ENCODE measurements at regions of chr11 and their contacts with region 1.

Region 1: GRCh38 chr11:2975594-2975993 is 16.5 kb downstream of the NAP1L4 start:
- DNase-seq: peak; percentile 60 to 73 (median 73)
- H3K4me3 ChIP-seq: no peak overlapping the region
- H3K27ac ChIP-seq: no peak overlapping the region
- H3K4me1 ChIP-seq: no peaks in the 10 kb centered on the region
- H3K27me3 ChIP-seq: no peaks in the 10 kb centered on the region

Region 2: DNA sequence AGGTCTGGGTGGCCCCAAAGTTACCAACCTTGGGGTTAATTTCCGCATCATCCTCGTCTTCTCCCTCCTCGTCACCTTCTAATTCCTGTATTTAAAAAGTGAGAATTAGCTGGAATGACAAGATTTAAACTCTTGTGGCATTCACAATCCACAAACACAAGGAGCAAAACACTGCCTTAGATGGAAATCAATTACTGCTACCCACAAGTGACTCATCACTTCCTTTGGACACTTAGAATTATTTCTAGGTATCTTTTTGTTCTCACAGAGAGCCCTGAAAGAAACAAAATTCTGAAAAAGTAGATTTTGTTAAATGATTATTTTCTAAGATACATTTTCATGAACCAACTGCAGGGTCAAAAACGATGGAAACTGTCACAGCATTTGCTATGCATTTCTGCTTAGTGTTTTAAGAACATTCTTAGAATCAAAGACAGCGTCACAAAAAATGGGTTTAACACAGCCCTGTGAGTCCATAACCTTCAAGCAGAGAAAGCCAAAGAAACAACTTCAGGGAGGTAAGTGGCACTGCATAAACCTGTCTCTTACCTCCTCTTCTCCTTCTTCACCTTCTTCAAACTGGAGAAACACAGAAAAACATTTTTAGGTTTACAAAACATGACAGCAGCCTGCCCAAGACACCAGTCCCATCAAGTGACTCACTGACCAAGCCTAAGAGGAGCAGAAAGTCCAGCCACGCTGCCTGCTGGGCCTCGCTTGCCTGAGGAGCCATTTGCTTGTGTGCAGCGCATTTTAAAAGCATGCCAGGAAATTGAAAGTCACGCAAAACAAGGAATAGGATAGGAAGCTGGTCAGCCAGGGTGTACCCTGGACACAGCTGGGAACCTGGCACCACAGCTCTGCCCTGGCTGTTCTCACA is 24.1 kb before region 1 on chr11:
- CTCF ChIA-PET with region 1: interaction called, 14 read pairs
- POLR2A ChIA-PET with region 1: no interaction called
- DNase-seq: peak in 2 of 3 donors; percentile 35 to 45
- H3K4me3 ChIP-seq: no peak overlapping the region
- H3K27ac ChIP-seq: peak overlapping the region in 1 of 2 experiments; percentile 56
- H3K4me1 ChIP-seq: peaks cover 0 to 21% (median 15%) of the 10 kb centered on the region in 4 experiments
- H3K27me3 ChIP-seq: no peaks in the 10 kb centered on the region

Region 3: DNA sequence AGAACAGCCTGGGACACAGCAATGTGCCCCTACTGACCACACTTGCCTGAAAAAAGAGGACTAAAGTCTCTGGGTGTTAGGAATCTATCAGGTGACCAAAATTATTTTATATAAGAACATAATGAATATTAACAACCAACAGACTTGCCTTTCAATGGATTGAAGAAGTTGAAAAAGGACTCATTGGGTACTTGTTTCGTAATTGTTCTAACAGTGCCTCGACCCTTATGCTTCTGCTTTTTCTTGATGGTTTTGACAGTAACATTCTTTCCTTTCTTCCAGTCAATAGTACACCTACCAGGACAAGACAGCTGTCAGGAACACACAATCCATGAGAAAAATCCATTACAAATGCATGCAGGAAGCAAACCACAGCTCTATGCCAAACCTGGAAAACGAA is 17.3 kb before region 1 on chr11:
- CTCF ChIA-PET with region 1: interaction called, 14 read pairs
- POLR2A ChIA-PET with region 1: no interaction called
- DNase-seq: no peak
- H3K4me3 ChIP-seq: no peak overlapping the region
- H3K27ac ChIP-seq: no peak overlapping the region
- H3K4me1 ChIP-seq: peaks cover 0 to 2% (median 0%) of the 10 kb centered on the region in 4 experiments
- H3K27me3 ChIP-seq: no peaks in the 10 kb centered on the region

Region 4: DNA sequence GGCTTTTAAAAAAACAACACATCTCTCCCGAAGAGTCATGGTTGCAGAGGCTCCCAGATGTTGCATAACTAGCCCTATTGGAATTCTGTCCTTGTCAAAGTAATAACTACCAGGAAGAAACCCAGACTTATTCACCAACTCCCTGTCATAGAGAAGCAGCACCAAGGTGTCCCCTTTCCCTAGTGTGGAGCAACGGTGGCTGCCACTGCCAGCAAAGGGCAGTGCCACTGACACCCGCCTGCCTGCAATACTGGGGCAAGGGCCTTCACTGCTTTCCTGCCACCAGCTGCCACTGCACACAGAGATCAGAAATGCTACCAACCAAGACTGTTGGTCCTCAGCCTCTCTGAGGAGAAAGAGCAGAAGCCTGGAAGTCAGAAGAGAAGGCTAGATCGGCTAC is 10.8 kb before region 1 on chr11:
- CTCF ChIA-PET with region 1: interaction called, 12 read pairs
- POLR2A ChIA-PET with region 1: no interaction called
- DNase-seq: no peak
- H3K4me3 ChIP-seq: no peak overlapping the region
- H3K27ac ChIP-seq: no peak overlapping the region
- H3K4me1 ChIP-seq: no peaks in the 10 kb centered on the region
- H3K27me3 ChIP-seq: no peaks in the 10 kb centered on the region

Region 5: DNA sequence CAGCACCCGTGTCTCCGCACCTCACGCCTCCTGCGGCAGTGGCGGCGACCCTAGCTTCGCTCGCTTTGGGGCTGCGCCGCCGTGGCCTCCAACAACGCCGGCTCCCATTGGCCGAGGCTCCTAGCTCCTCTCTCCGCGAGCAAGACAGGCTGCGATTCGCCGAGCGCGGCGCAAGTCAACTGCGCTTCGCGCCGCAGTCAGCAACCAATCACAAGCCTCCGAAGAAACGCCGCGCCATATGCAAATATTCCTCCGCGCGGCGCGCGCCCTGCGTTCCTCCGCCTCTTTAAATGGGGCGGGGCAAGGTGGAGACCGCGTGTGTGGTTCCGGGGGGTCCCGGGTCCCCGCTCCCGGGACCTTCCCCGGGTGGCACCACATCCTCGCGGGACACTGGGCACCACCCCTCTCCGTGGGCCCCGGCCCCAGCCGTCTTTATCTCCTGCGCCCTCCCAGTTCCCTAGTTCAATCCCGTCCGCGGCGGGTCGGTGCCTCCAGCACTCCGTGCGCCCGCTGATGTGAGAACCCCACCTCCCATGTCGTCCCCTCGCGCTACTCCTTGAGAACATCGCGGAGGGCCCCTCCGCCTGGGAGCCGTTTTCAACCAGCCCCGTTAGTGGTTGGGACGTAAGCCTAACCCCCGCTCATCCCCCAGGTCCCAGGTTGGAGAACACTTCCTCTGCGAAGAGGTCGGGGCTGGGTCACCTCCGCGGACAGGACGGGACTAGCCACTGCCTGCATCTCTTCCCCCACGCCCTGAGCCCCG is 16.8 kb after region 1 on chr11 and contains the start of gene NAP1L4:
- CTCF ChIA-PET with region 1: interaction called, 21 read pairs
- POLR2A ChIA-PET with region 1: interaction called, 3 read pairs
- DNase-seq: peak; percentile 97 to 98 (median 98)
- H3K4me3 ChIP-seq: peak within 1 kb of the TSS; percentile 62 to 99 (median 94)
- H3K27ac ChIP-seq: peak within 1 kb of the TSS; percentile 91 to 96
- H3K4me1 ChIP-seq: peaks cover 25 to 43% (median 36%) of the 10 kb centered on the region in 4 experiments
- H3K27me3 ChIP-seq: no peaks in the 10 kb centered on the region

Region 6: DNA sequence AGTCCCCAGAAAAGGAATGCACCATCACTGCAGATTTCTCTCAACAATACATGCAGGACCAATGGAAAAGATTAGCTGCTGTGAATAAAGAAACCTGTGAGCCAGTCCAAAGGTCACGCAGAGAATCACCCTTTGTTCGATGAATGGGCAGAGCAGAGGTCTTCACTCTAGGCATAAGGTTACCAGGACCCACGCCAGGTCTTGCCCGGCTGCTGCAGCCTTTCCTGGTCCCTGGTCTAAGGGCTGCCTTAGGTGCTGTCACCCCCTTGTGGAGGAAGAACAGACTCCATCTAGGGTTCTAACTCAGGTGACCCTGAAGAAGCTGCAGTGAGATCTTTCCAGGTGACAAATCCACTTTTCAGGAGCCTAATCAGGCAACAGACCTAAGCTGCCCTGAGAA is 45.5 kb after region 1 on chr11:
- CTCF ChIA-PET with region 1: interaction called, 26 read pairs
- POLR2A ChIA-PET with region 1: no interaction called
- DNase-seq: peak; percentile 31 to 56 (median 46)
- H3K4me3 ChIP-seq: no peak overlapping the region
- H3K27ac ChIP-seq: no peak overlapping the region
- H3K4me1 ChIP-seq: peaks cover 0 to 14% (median 0%) of the 10 kb centered on the region in 4 experiments
- H3K27me3 ChIP-seq: no peaks in the 10 kb centered on the region

Region 7: GRCh38 chr11:3073029-3073435 is 97.4 kb after region 1 on chr11:
- CTCF ChIA-PET with region 1: no interaction called
- POLR2A ChIA-PET with region 1: no interaction called
- DNase-seq: no peak
- H3K4me3 ChIP-seq: no peak overlapping the region
- H3K27ac ChIP-seq: no peak overlapping the region
- H3K4me1 ChIP-seq: no peaks in the 10 kb centered on the region
- H3K27me3 ChIP-seq: peaks cover 0 to 2% (median 0%) of the 10 kb centered on the region in 5 experiments